ENCODE measurements at regions of chr6 and their contacts with region 1.

Region 1: GRCh38 chr6:125974214-125974866 is 12.0 kb upstream of the TRMT11 start:
- DNase-seq: peak in 1 of 35 experiments; percentile 63
- ATAC-seq: peak in 2 of 4 experiments; percentile 47 to 63
- H3K4me3 ChIP-seq: no peak overlapping the region
- H3K4me3 Mint-ChIP-seq: no peak overlapping the region
- H3K27ac ChIP-seq: no peak overlapping the region
- H3K27ac Mint-ChIP-seq: no peak overlapping the region
- H3K4me1 ChIP-seq: peaks cover 0 to 2% of the 10 kb centered on the region in 2 experiments
- H3K4me1 Mint-ChIP-seq: peaks cover 11 to 12% (median 11%) of the 10 kb centered on the region in 3 donors
- H3K27me3 ChIP-seq: no peaks in the 10 kb centered on the region
- H3K27me3 Mint-ChIP-seq: no peaks in the 10 kb centered on the region

Region 2: GRCh38 chr6:125165256-125165655 is 809.1 kb before region 1 on chr6:
- CTCF ChIA-PET with region 1: no interaction called
- POLR2A ChIA-PET with region 1: interaction called in 1 of 2 experiments, 13 read pairs
- DNase-seq: no peak
- ATAC-seq: no peak
- H3K4me3 ChIP-seq: no peak overlapping the region
- H3K4me3 Mint-ChIP-seq: no peak overlapping the region
- H3K27ac ChIP-seq: no peak overlapping the region
- H3K27ac Mint-ChIP-seq: no peak overlapping the region
- H3K4me1 ChIP-seq: no peaks in the 10 kb centered on the region
- H3K4me1 Mint-ChIP-seq: no peaks in the 10 kb centered on the region
- H3K27me3 ChIP-seq: peaks cover 0 to 3% of the 10 kb centered on the region in 2 experiments
- H3K27me3 Mint-ChIP-seq: peaks cover 10 to 24% of the 10 kb centered on the region in 2 donors

Region 3: GRCh38 chr6:125749173-125749864 is 225.0 kb before region 1 on chr6 and contains the start of gene HEY2:
- CTCF ChIA-PET with region 1: interaction called in 1 of 2 experiments, 13 read pairs
- POLR2A ChIA-PET with region 1: no interaction called
- DNase-seq: peak; percentile 41 to 88 (median 62)
- ATAC-seq: peak; percentile 74 to 84 (median 82)
- H3K4me3 ChIP-seq: peak within 1 kb of the TSS; percentile 60 to 86
- H3K4me3 Mint-ChIP-seq: peak within 1 kb of the TSS; percentile 85 to 92 (median 89)
- H3K27ac ChIP-seq: no peak within 1 kb of the TSS
- H3K27ac Mint-ChIP-seq: peak within 1 kb of the TSS; percentile 23 to 57
- H3K4me1 ChIP-seq: peaks cover 12 to 34% of the 10 kb centered on the region in 2 experiments
- H3K4me1 Mint-ChIP-seq: peaks cover 35 to 47% (median 37%) of the 10 kb centered on the region in 3 donors
- H3K27me3 ChIP-seq: peaks cover 6 to 34% of the 10 kb centered on the region in 2 experiments
- H3K27me3 Mint-ChIP-seq: peaks cover 28 to 61% of the 10 kb centered on the region in 2 donors
- total RNA-seq, gene HEY2: 0.16 to 0.32 (median 0.24) TPM in 4 of 5 donors, not detected in the other

Region 4: GRCh38 chr6:125963817-125964216 is 10.5 kb before region 1 on chr6:
- CTCF ChIA-PET with region 1: interaction called, 9 to 11 read pairs
- POLR2A ChIA-PET with region 1: interaction called in 1 of 2 experiments, 4 read pairs
- DNase-seq: no peak
- ATAC-seq: no peak
- H3K4me3 ChIP-seq: no peak overlapping the region
- H3K4me3 Mint-ChIP-seq: no peak overlapping the region
- H3K27ac ChIP-seq: no peak overlapping the region
- H3K27ac Mint-ChIP-seq: no peak overlapping the region
- H3K4me1 ChIP-seq: peaks cover 0 to 1% of the 10 kb centered on the region in 2 experiments
- H3K4me1 Mint-ChIP-seq: peaks cover 35 to 48% (median 43%) of the 10 kb centered on the region in 3 donors
- H3K27me3 ChIP-seq: no peaks in the 10 kb centered on the region
- H3K27me3 Mint-ChIP-seq: no peaks in the 10 kb centered on the region

Region 5: GRCh38 chr6:125995972-125996580 is 21.7 kb after region 1 on chr6:
- CTCF ChIA-PET with region 1: interaction called, 3 to 15 read pairs
- POLR2A ChIA-PET with region 1: interaction called in 1 of 2 experiments, 4 read pairs
- DNase-seq: peak; percentile 41 to 84 (median 60)
- ATAC-seq: peak; percentile 92 to 98 (median 96)
- H3K4me3 ChIP-seq: peak overlapping the region in 1 of 2 donors; percentile 15
- H3K4me3 Mint-ChIP-seq: peak overlapping the region; percentile 66 to 70 (median 67)
- H3K27ac ChIP-seq: no peak overlapping the region
- H3K27ac Mint-ChIP-seq: no peak overlapping the region
- H3K4me1 ChIP-seq: no peaks in the 10 kb centered on the region
- H3K4me1 Mint-ChIP-seq: peaks cover 27 to 34% (median 31%) of the 10 kb centered on the region in 3 donors
- H3K27me3 ChIP-seq: no peaks in the 10 kb centered on the region
- H3K27me3 Mint-ChIP-seq: no peaks in the 10 kb centered on the region

Measured in T-cell (primary cell).